Ovary (tissue), 10 donors: ENCODE measurements at regions of chr1 and their contacts with region 1.

Region 1: GRCh38 chr1:9101510-9102146 is 27.3 kb downstream of the GPR157 start:
- DNase-seq: peak; percentile 53 to 70 (median 61)
- H3K4me3 ChIP-seq: no peak overlapping the region
- H3K27ac ChIP-seq: no peak overlapping the region
- H3K4me1 ChIP-seq: no peaks in the 10 kb centered on the region
- H3K27me3 ChIP-seq: no peaks in the 10 kb centered on the region
- CTCF ChIP-seq: peak; percentile 49 to 59 (median 57)
- EP300 ChIP-seq: no peak
- POLR2A ChIP-seq: no peak

Region 2: GRCh38 chr1:8925406-8925805 is 176.2 kb before region 1 on chr1:
- intact Hi-C with region 1: loop called in 3 of 4 experiments (anchors 5 to 10 kb)
- DNase-seq: no peak
- H3K4me3 ChIP-seq: no peak overlapping the region
- H3K27ac ChIP-seq: no peak overlapping the region
- H3K4me1 ChIP-seq: no peaks in the 10 kb centered on the region
- H3K27me3 ChIP-seq: no peaks in the 10 kb centered on the region
- CTCF ChIP-seq: no peak
- EP300 ChIP-seq: no peak
- POLR2A ChIP-seq: no peak

Region 3: DNA sequence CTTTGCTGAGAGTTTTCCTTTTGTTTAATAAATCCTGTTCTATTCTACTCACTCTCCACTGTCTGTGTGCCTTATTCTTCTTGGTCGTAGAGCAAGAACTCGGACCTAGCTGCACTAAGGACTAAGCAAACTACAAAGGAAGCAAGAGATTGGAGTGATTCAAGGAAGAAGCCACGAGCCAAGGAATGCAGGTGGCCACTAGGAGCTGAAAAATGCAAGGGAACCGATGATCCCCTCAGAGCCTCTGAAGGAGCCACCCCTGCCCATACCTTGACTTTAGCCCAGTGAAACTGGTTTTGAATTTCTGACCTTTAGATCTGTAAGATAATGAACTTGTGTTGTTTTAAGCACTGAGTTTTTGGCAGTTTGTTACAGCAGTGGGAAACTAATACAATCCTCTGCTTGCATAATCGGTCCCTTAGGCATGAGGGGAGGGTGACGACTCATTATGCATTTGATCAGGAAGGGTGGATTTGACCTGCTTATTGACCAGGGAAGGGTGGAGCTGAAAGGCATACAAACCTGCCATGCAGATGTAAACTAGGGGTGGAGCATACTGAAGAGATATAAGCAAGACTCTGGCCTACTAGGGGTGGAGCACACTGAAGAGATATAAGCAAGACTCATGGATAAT is 162.1 kb before region 1 on chr1:
- intact Hi-C with region 1: loop called in 1 of 4 experiments (anchors 10 kb)
- DNase-seq: no peak
- H3K4me3 ChIP-seq: no peak overlapping the region
- H3K27ac ChIP-seq: peak overlapping the region in 1 of 2 donors; percentile 36
- H3K4me1 ChIP-seq: no peaks in the 10 kb centered on the region
- H3K27me3 ChIP-seq: no peaks in the 10 kb centered on the region
- CTCF ChIP-seq: no peak
- EP300 ChIP-seq: no peak
- POLR2A ChIP-seq: no peak

Region 4: DNA sequence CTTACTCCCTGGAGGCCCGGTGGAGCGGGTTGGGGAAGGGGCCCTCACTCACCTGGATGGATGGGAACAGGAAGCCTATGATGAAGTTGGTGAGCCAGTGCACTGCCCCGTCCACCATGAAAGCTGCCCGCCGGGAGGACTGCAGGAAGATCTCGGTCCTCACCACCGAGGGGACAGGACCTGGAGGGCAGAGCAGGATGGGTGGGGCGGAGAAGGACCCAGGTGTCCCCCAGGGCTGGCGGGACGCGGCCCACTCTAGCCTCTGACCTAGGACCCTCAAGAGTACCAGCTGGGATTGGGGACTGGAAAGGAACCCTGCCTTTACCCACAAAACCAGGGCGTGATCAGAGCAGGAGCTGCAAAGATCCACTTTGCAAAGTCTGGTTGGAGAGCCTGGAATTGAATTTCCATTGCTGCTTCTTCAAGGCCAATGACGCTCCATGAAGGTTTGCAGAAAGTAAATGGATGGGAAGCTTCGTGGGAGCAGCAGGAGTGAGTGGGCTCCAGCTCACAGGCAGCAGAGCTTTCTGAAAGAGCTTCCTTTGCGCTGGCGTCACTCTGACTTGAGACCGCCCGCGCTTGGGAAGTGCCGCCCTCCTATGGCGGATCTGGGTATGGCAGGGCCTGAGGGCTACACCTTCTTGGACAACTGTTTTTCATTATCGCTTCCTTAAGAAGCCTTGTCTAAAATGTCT is 96.8 kb before region 1 on chr1:
- intact Hi-C with region 1: loop called in 3 of 4 experiments (anchors 5 to 10 kb)
- DNase-seq: peak; percentile 63 to 85 (median 79)
- H3K4me3 ChIP-seq: no peak overlapping the region
- H3K27ac ChIP-seq: no peak overlapping the region
- H3K4me1 ChIP-seq: no peaks in the 10 kb centered on the region
- H3K27me3 ChIP-seq: no peaks in the 10 kb centered on the region
- CTCF ChIP-seq: peak; percentile 66 to 83 (median 72)
- EP300 ChIP-seq: no peak
- POLR2A ChIP-seq: no peak

Region 5: GRCh38 chr1:9018333-9018732 is 83.3 kb before region 1 on chr1:
- intact Hi-C with region 1: loop called in 2 of 4 experiments (anchors 5 to 10 kb)
- DNase-seq: peak in 4 of 5 donors; percentile 47 to 56 (median 52)
- H3K4me3 ChIP-seq: no peak overlapping the region
- H3K27ac ChIP-seq: no peak overlapping the region
- H3K4me1 ChIP-seq: peaks cover 2% of the 10 kb centered on the region
- H3K27me3 ChIP-seq: no peaks in the 10 kb centered on the region
- CTCF ChIP-seq: no peak
- EP300 ChIP-seq: no peak
- POLR2A ChIP-seq: no peak